Ascending aorta (tissue), 2 donors: ENCODE measurements at regions of chr12 and their contacts with region 1.

Region 1: DNA sequence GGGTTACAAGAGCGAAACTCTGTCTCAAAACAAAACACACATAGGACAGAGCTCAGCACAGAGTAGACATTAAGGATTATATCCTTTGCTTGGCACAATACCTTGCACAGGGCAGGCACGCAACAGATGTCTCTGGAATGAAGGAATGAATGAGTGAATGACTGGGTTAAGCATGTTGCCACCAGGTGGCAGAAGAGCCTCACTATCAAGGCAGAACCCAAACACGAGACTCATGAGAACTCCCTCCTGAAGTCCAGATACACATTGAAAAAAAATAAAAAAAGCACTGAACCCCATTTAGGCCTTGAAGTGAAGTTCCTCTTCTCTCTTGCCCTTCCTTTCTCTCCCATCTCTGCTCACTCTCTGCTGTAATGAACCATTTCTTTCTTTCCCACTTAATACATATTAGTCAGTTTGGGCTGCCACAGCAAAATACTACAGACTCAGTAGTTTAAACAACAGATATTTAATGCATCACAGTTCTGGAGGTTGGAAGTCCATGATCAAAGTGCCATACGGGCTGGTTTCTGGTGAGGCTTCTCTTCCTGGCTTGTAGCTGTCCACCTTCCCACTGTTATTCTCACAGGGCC is 26.6 kb upstream of the LTA4H start:
- DNase-seq: peak in 1 of 2 donors; percentile 86
- H3K4me3 ChIP-seq: no peak overlapping the region
- H3K27ac ChIP-seq: no peak overlapping the region
- H3K4me1 ChIP-seq: peaks cover 0 to 3% of the 10 kb centered on the region in 2 donors
- H3K27me3 ChIP-seq: no peaks in the 10 kb centered on the region
- CTCF ChIP-seq: peak; percentile 71 to 83 (median 81)

Region 2: DNA sequence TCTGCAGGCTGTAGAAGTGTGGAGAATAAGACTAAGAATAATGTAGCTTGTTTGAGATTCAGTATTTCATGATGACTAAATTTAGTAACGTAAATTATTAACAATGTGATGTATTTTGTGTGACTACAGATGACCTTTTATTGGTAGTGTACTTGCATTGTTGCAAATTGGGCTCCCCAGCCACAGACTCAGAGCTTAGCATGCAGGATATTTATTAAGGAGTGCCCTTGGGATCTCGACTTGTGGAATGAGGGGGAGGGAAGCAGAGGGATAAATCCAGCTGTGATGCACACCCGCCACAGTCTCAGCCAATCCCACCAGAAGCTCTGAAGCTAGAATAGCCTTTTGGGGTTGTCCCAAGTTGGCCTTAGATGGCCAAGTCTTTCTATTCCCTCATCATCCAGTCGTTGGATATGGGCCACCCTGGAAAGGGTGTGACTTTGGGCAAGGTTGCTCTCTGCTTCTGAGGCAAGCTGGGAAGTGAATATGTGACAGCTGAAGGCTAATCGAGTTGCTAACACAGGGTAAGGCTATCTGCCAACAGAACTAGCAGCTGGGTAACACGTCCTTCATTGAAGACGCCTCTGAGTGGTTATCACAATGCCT is 468.6 kb before region 1 on chr12:
- intact Hi-C with region 1: no loop called
- DNase-seq: no peak
- H3K4me3 ChIP-seq: no peak overlapping the region
- H3K27ac ChIP-seq: no peak overlapping the region
- H3K4me1 ChIP-seq: no peaks in the 10 kb centered on the region
- H3K27me3 ChIP-seq: no peaks in the 10 kb centered on the region
- CTCF ChIP-seq: no peak

Region 3: GRCh38 chr12:96219698-96220206 is 157.8 kb after region 1 on chr12:
- intact Hi-C with region 1: loop called (anchors 1 kb)
- DNase-seq: peak in 1 of 2 donors; percentile 63
- H3K4me3 ChIP-seq: no peak overlapping the region
- H3K27ac ChIP-seq: no peak overlapping the region
- H3K4me1 ChIP-seq: peaks cover 0 to 8% of the 10 kb centered on the region in 2 donors
- H3K27me3 ChIP-seq: no peaks in the 10 kb centered on the region
- CTCF ChIP-seq: no peak

Region 4: DNA sequence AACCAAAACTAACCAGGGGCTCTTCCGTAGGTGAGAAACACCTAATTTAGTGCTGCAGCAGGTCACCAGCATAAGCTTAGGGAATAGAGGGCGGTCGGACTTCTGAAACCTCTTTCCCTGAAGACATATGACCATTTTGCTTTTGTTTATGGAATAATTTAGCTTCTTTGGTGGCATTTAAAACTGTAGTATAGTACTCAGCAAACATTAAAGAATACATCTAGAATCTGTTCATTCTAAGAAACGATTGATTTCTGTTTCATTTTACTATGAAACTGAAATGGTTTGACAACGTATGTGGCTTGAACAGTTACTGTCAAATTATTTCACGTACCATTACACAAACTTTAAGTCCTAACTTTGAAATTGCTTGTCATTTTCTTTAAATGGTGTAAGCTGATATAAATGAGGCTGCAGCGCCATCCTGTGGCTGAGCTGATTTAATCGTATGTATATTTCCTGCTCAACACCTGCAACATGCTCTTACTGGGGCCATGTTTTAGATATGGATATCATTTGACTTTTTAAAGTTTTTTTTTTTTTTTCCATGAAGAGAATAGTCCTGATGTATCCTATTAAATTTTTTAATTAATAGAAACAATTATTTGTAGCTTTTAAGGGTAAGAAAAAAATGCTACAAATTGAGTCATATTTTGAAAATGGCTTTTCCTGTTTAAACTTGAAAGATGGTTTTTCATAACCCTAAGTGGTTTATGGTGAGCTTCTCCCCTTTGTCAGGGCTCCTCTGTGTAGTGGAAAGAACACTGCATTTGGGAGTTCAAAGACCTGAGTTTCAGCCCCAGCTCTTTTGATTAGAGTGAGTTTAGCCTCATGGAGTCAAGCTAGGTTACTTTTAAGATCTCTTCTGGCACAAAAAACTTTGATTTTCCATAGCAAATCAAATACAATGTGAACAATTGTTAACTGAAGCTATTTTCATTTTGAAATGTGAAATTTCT is 454.8 kb after region 1 on chr12:
- intact Hi-C with region 1: loop called (anchors 1 kb)
- DNase-seq: peak in 1 of 2 donors; percentile 82
- H3K4me3 ChIP-seq: no peak overlapping the region
- H3K27ac ChIP-seq: no peak overlapping the region
- H3K4me1 ChIP-seq: no peaks in the 10 kb centered on the region
- H3K27me3 ChIP-seq: no peaks in the 10 kb centered on the region
- CTCF ChIP-seq: peak; percentile 49 to 51 (median 50)